GM13976 (cell line): ENCODE measurements at regions of chr9 and their contacts with region 1.

Region 1: DNA sequence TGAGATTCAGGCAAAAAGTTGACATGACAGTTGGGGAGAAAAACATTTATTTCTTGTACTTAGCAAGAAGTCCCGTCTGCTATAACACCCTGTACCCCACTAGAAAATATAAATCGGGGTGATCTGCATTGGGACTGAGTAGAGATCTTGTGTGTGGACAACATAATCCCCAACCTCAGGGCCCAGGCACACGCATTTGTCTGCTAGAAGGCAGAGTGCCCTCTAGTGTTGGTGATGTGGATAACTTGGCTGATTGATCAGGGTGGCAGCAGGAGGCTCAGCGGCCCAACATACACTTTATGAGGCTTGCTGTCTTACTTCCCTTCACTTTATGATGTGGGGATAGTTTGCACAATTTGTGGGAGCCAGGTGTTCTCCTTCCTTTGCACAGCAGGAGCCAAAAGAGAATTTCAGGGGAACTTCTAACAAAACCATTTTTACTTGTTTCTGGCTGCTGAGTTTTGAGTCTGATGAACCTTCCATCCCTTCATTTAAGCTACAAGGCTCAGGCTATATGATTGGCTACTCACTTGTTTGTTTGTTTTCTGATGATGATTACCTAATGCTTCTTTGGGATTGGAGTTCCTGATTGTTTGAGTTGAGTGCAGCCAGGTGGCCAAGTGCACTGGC is 263.2 kb downstream of the DMAC1 start:
- DNase-seq: peak; percentile 34
- CTCF ChIP-seq: peak; percentile 69

Region 2: GRCh38 chr9:6827439-6827838 is 709.0 kb before region 1 on chr9:
- in situ Hi-C with region 1: loop called (anchors 25 kb)
- DNase-seq: peak; percentile 55
- CTCF ChIP-seq: peak; percentile 41

Region 3: GRCh38 chr9:6907772-6908381 is 628.5 kb before region 1 on chr9:
- in situ Hi-C with region 1: loop called (anchors 25 kb)
- DNase-seq: no peak
- CTCF ChIP-seq: no peak

Region 4: DNA sequence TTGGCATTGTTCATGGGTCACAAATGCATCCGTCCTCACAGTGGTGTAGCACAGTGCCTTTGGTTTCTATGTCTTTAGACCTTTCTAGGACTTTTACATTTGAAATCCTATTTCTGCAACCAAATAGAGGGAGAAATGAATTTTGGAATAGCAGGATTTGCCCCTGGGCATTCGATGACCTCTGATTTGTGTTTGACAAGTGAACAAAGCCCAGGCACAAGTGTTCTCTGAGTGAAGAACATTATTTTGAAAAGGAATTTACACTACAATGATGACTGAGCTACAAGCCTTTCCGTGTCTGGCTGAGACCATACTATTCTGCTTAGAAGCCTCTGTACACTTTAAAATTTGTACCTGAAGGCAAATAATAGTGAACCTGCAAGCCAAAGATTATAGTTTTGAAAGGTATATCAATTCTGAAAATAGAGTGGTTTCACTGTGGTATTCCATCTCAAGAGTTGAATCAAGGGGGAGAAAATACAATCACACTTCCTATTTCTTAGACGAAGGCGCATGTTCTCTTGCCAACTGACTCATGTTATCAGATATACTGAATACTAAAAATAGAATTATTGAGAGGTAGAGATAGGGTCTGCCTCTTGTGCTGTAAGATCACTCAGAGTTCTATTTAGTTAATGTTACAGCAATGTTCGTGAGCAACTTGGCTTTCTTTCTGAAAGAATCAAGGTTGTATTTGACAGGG is 481.1 kb before region 1 on chr9:
- in situ Hi-C with region 1: loop called (anchors 10 kb)
- DNase-seq: no peak
- CTCF ChIP-seq: no peak

Region 5: GRCh38 chr9:7234143-7234542 is 302.3 kb before region 1 on chr9:
- in situ Hi-C with region 1: loop called (anchors 25 kb)
- DNase-seq: peak; percentile 29
- CTCF ChIP-seq: peak; percentile 50

Region 6: GRCh38 chr9:7405924-7406604 is 130.4 kb before region 1 on chr9:
- in situ Hi-C with region 1: loop called (anchors 10 kb)
- DNase-seq: peak; percentile 36
- CTCF ChIP-seq: no peak

Region 7: DNA sequence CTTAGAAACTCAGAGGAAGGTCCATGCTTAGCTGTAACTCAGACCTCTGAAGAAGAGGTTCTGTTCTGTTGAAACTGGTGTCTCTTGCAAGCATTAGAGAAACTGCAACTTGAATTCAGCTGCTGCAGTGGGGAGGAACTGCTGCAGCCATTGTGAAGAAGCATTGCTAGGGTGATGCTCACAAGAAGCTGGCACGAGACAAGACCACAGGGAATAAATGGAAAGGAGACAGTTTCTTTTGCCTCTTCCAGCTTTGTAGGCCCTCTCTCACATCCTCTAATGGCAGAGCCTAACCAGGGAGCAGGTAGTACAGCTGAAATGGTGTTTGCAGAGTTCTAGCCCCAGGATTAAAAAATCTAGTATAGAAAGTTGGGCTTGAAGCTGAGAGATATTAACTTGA is 411.2 kb after region 1 on chr9:
- in situ Hi-C with region 1: no loop called
- DNase-seq: no peak
- CTCF ChIP-seq: no peak